ENCODE measurements at regions of chr1 and their contacts with region 1.

Region 1: GRCh38 chr1:172976222-172977041 is 74.3 kb downstream of the TNFSF18 start:
- DNase-seq: peak; percentile 100
- ATAC-seq: peak; percentile 99
- H3K4me3 ChIP-seq: peak overlapping the region; percentile 1; the same call in 1 of the 2 replicates
- H3K27ac ChIP-seq: peak overlapping the region; percentile 71
- H3K4me1 ChIP-seq: peaks cover 30% of the 10 kb centered on the region
- H3K27me3 ChIP-seq: no peaks in the 10 kb centered on the region
- CTCF ChIP-seq: no peak

Region 2: GRCh38 chr1:171530676-171531075 is 1445.8 kb before region 1 on chr1:
- CTCF ChIA-PET with region 1: no interaction called
- POLR2A ChIA-PET with region 1: interaction called, 21 read pairs
- intact Hi-C with region 1: no loop called
- DNase-seq: no peak
- ATAC-seq: peak; percentile 30; the same call in 1 of the 2 replicates
- H3K4me3 ChIP-seq: no peak overlapping the region
- H3K27ac ChIP-seq: no peak overlapping the region
- H3K4me1 ChIP-seq: no peaks in the 10 kb centered on the region
- H3K27me3 ChIP-seq: no peaks in the 10 kb centered on the region
- CTCF ChIP-seq: no peak

Region 3: GRCh38 chr1:172885971-172886370 is 90.5 kb before region 1 on chr1:
- CTCF ChIA-PET with region 1: interaction called, 17 read pairs
- POLR2A ChIA-PET with region 1: no interaction called
- intact Hi-C with region 1: no loop called
- DNase-seq: peak; percentile 90
- ATAC-seq: peak; percentile 61
- H3K4me3 ChIP-seq: no peak overlapping the region
- H3K27ac ChIP-seq: peak overlapping the region; percentile 15
- H3K4me1 ChIP-seq: peaks cover 42% of the 10 kb centered on the region
- H3K27me3 ChIP-seq: no peaks in the 10 kb centered on the region
- CTCF ChIP-seq: no peak

Region 4: GRCh38 chr1:172917972-172918371 is 58.5 kb before region 1 on chr1:
- CTCF ChIA-PET with region 1: interaction called, 8 read pairs
- POLR2A ChIA-PET with region 1: interaction called, 17 read pairs
- intact Hi-C with region 1: loop called (anchors 2 kb)
- DNase-seq: peak; percentile 100
- ATAC-seq: peak; percentile 89
- H3K4me3 ChIP-seq: peak overlapping the region; percentile 4; the same call in 1 of the 2 replicates
- H3K27ac ChIP-seq: peak overlapping the region; percentile 72
- H3K4me1 ChIP-seq: peaks cover 63% of the 10 kb centered on the region
- H3K27me3 ChIP-seq: no peaks in the 10 kb centered on the region
- CTCF ChIP-seq: no peak

Region 5: GRCh38 chr1:172951730-172952365 is 24.6 kb before region 1 on chr1:
- CTCF ChIA-PET with region 1: no interaction called
- POLR2A ChIA-PET with region 1: no interaction called
- intact Hi-C with region 1: no loop called
- DNase-seq: peak; percentile 65
- ATAC-seq: no peak
- H3K4me3 ChIP-seq: no peak overlapping the region
- H3K27ac ChIP-seq: no peak overlapping the region
- H3K4me1 ChIP-seq: peaks cover 30% of the 10 kb centered on the region
- H3K27me3 ChIP-seq: no peaks in the 10 kb centered on the region
- CTCF ChIP-seq: no peak

Region 6: DNA sequence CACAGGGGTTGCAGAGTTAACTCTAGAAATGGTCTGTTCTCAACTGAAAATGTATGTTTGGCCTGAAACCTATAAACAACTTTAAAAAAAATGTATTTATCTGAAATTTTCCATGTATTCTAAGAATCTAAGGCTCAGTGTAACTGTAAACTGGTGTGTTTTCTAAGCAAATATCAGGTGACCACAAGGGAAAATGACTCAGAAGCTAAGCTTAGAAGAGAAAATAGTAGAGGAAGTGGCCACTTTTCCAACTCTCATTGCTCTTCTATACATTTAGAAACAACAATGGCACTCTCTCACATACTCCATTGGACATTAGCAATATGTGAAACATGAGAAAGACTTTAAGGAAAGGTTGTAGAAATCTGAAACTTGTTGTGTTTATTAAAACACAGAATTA is 66.8 kb after region 1 on chr1:
- CTCF ChIA-PET with region 1: no interaction called
- POLR2A ChIA-PET with region 1: no interaction called
- intact Hi-C with region 1: loop called (anchors 5 kb)
- DNase-seq: peak; percentile 99
- ATAC-seq: peak; percentile 99
- H3K4me3 ChIP-seq: peak overlapping the region; percentile 1; the same call in 1 of the 2 replicates
- H3K27ac ChIP-seq: peak overlapping the region; percentile 33
- H3K4me1 ChIP-seq: peaks cover 27% of the 10 kb centered on the region
- H3K27me3 ChIP-seq: no peaks in the 10 kb centered on the region
- CTCF ChIP-seq: no peak

Region 7: GRCh38 chr1:173062156-173062938 is 85.9 kb after region 1 on chr1:
- CTCF ChIA-PET with region 1: no interaction called
- POLR2A ChIA-PET with region 1: no interaction called
- intact Hi-C with region 1: loop called (anchors 1 kb)
- DNase-seq: peak; percentile 100
- ATAC-seq: peak; percentile 100
- H3K4me3 ChIP-seq: no peak overlapping the region
- H3K27ac ChIP-seq: peak overlapping the region; percentile 43
- H3K4me1 ChIP-seq: peaks cover 36% of the 10 kb centered on the region
- H3K27me3 ChIP-seq: no peaks in the 10 kb centered on the region
- CTCF ChIP-seq: no peak

Region 8: GRCh38 chr1:173409613-173410012 is 433.2 kb after region 1 on chr1:
- CTCF ChIA-PET with region 1: no interaction called
- POLR2A ChIA-PET with region 1: no interaction called
- intact Hi-C with region 1: loop called (anchors 1 kb)
- DNase-seq: peak; percentile 94
- ATAC-seq: peak; percentile 72
- H3K4me3 ChIP-seq: no peak overlapping the region
- H3K27ac ChIP-seq: peak overlapping the region; percentile 9; the same call in 1 of the 2 replicates
- H3K4me1 ChIP-seq: peaks cover 49% of the 10 kb centered on the region
- H3K27me3 ChIP-seq: no peaks in the 10 kb centered on the region
- CTCF ChIP-seq: no peak